ENCODE measurements at regions of chr5 and their contacts with region 1.

Region 1: GRCh38 chr5:142713121-142713706 is 27.3 kb upstream of the FGF1 start:
- DNase-seq: peak; percentile 54
- H3K4me3 ChIP-seq: peak overlapping the region; percentile 72
- H3K27ac ChIP-seq: no peak overlapping the region
- H3K27me3 ChIP-seq: peaks cover 2% of the 10 kb centered on the region
- CTCF ChIP-seq: peak; percentile 79

Region 2: DNA sequence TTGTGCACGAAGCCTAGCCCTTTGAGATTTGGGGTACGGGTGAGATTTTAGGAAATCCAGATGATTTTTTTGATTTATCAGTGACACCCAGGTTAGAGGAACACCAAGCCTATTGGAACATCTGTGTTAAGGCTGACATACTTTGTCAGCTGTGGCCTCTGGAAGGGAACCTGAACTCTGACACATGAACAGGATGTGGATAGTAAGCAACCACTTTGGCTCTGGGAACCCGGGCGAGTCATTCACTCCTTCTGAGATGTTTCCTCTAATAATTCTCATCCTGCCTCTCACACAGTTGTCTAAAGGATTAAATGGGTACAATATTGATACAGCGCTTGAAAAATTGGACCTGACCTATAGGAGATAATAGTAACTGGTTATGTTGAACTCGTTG is 95.1 kb before region 1 on chr5:
- CTCF ChIA-PET with region 1: interaction called, 31 read pairs
- POLR2A ChIA-PET with region 1: no interaction called
- DNase-seq: peak; percentile 43
- H3K4me3 ChIP-seq: no peak overlapping the region
- H3K27ac ChIP-seq: no peak overlapping the region
- H3K27me3 ChIP-seq: no peaks in the 10 kb centered on the region
- CTCF ChIP-seq: no peak

Region 3: GRCh38 chr5:142674531-142675469 is 38.4 kb before region 1 on chr5:
- CTCF ChIA-PET with region 1: interaction called, 14 read pairs
- POLR2A ChIA-PET with region 1: no interaction called
- DNase-seq: peak; percentile 41
- H3K4me3 ChIP-seq: no peak overlapping the region
- H3K27ac ChIP-seq: peak overlapping the region; percentile 57
- H3K27me3 ChIP-seq: peaks cover 2% of the 10 kb centered on the region
- CTCF ChIP-seq: no peak

Region 4: GRCh38 chr5:142748568-142749249 is 35.5 kb after region 1 on chr5:
- CTCF ChIA-PET with region 1: interaction called, 23 read pairs
- POLR2A ChIA-PET with region 1: no interaction called
- DNase-seq: no peak
- H3K4me3 ChIP-seq: no peak overlapping the region
- H3K27ac ChIP-seq: no peak overlapping the region
- H3K27me3 ChIP-seq: no peaks in the 10 kb centered on the region
- CTCF ChIP-seq: peak; percentile 19; the same call in 1 of the 2 replicates

Region 5: DNA sequence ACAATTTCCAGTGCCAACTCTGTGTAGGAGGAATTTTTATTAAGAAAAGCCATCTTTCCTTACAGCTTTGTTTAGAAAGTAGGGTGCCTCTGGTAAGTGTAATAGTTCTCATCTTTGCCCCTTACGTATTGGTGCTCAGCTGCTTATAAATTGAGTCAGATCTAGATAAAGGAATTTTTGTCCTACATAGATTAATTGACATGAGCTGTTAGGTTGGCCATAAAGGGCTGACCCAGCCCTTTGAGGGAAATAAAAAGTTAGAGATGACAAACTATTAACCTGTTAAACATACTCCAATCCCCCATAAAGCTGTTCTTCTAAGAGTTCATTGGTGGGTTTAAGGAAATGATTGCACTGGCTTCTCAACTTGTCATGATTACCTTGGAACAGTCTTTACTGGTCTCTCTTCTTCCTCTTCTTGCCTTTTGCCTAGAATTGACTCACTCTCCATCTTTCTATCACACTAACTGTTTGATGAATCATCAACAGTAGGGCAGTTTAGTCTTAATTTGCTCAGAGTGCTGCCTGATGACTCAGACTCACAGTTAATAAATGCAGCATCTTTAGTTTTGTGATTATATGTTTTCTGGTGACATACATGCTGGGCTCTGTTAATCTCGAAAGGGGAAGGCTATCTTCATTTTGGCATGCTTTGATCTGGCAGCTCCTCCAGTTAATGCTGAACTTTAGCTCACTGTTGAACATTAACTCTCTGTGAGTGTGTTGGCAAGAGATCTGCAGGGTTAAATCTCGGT is 108.7 kb after region 1 on chr5:
- CTCF ChIA-PET with region 1: interaction called, 10 read pairs
- POLR2A ChIA-PET with region 1: no interaction called
- DNase-seq: peak; percentile 45
- H3K4me3 ChIP-seq: no peak overlapping the region
- H3K27ac ChIP-seq: no peak overlapping the region
- H3K27me3 ChIP-seq: no peaks in the 10 kb centered on the region
- CTCF ChIP-seq: no peak

Region 6: GRCh38 chr5:142860270-142860669 is 147.1 kb after region 1 on chr5:
- CTCF ChIA-PET with region 1: interaction called, 48 read pairs
- POLR2A ChIA-PET with region 1: no interaction called
- DNase-seq: no peak
- H3K4me3 ChIP-seq: no peak overlapping the region
- H3K27ac ChIP-seq: no peak overlapping the region
- H3K27me3 ChIP-seq: peaks cover 10% of the 10 kb centered on the region
- CTCF ChIP-seq: no peak

Region 7: DNA sequence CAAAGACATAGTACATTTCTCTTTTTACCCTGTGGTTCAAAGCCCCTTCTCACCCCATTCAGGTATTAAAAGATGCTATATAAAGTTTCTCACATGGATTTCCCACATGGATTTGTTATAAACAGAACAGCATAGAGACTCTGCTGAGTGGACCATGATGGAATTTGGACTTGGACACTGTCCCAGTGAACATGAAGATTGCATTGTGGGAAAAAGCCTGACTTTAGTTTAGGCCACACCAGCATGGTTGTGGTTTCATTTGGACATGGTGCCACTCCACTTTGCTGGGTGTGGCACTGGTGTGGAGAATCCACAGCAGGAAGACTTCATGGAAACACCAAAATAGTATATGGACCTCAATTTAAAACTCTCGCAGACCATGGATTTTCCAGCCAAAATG is 181.5 kb after region 1 on chr5:
- CTCF ChIA-PET with region 1: interaction called, 1,004 read pairs
- POLR2A ChIA-PET with region 1: no interaction called
- DNase-seq: no peak
- H3K4me3 ChIP-seq: no peak overlapping the region
- H3K27ac ChIP-seq: no peak overlapping the region
- H3K27me3 ChIP-seq: no peaks in the 10 kb centered on the region
- CTCF ChIP-seq: no peak

Region 8: DNA sequence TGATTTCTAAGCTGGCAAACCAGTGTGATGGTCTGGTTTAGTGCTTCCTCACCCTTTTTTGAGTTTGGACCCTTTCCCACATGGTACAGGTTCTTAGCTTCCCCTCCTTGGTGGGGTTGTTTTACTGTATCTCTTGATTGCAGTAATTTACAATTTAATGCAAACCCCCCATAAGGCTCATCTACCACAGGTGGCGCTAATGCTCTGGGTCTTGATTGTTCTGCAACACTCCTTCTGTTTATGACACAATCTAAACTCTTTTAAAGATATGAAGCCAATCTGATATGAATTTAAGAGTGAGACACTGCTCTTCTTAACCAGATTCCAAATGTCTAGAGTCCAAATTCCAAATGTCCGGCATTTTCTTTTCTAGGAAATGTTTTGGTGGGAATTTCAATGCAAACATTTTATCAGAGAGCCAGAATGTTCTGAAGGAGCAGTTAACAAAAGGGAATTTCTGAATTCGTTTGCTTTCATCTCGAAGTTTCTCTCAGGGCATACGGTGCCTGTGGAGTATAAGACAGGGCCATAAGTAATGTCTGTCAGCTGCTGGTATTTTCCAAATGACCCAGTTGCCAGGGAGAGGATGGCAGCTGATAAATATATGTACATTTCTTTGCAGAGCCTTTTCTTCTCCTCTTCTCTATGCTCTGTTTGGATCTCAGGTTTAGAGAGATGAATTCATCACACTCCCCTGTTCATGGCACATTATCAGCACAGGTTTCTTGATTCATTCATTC is 303.7 kb after region 1 on chr5:
- CTCF ChIA-PET with region 1: no interaction called
- POLR2A ChIA-PET with region 1: no interaction called
- DNase-seq: no peak
- H3K4me3 ChIP-seq: no peak overlapping the region
- H3K27ac ChIP-seq: no peak overlapping the region
- H3K27me3 ChIP-seq: no peaks in the 10 kb centered on the region
- CTCF ChIP-seq: peak; percentile 71

Region 9: DNA sequence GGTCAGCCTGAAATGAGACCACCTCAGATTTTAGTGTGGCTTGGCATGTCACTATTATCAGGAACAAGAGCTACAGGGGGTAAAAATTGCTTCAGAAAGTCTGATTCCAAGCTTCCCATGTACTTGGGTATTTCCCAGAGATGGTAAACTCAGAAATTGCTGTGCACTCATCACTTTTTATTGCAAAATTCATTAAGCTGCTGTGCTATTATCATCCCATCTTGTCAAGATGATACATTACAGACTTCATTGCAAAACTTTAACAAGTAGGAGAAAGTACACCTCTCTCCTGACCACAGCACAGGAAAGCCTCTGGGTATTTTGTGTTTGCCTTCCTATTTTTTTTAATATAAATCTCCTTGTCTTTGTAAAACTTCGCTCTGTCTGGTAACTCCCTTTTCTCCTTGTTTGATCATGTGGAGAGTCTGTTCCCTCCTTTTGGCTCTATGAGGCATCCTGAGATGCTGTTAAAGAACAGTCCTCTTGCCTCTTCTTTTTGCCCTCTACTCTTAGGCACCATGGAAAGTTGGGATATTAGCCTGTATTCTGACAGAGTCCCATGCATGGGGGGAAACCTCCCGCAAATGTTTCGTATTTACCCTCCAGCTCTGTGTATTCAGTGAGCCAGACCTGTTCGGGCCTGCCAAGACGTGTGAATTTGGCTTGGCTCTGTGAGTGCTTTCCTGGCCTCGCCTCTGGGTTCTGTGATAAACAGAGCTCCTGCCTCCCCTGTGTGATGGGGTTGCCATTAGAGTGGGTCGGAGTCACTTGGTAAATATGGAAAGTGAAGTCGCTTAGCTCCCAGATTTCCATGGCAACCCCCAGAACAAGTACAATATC is 429.6 kb after region 1 on chr5:
- CTCF ChIA-PET with region 1: no interaction called
- POLR2A ChIA-PET with region 1: no interaction called
- DNase-seq: no peak
- H3K4me3 ChIP-seq: no peak overlapping the region
- H3K27ac ChIP-seq: no peak overlapping the region
- H3K27me3 ChIP-seq: no peaks in the 10 kb centered on the region
- CTCF ChIP-seq: no peak

Measured in AG04450 (cell line).